CD8-positive, alpha-beta T cell (primary cell): ENCODE measurements at regions of chr12 and their contacts with region 1.

Region 1: DNA sequence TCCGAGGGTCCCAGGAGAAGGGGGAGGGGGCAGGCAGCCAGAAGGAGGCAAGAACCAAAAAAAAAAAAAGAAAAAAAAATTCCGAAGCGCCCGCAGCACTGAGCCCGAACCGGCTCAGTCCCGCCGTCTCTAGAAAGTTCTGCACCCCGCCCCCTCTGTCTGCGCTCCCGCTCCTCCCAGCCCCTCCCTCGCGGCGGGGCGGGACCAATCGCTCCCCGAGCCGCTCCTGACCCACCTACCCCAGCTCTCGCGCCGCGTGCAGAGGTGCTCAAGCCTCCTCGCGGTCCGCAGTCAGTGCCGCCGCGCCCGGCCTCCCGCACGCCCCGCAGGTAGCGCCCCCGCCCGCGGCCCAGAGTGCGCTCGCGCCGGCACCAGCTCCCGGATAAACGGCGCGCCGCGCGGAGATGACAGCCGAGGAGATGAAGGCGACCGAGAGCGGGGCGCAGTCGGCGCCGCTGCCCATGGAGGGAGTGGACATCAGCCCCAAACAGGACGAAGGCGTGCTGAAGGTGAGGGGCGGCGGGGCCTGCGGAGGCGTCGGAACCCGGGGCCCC is at the start of gene FKBP4:
- DNase-seq: peak; percentile 75 to 95 (median 88)
- ATAC-seq: peak; percentile 92
- H3K4me3 ChIP-seq: peak within 1 kb of the TSS; percentile 69 to 71
- H3K4me3 Mint-ChIP-seq: peak within 1 kb of the TSS; percentile 91
- H3K27ac ChIP-seq: peak within 1 kb of the TSS; percentile 50 to 63
- H3K27ac Mint-ChIP-seq: peak within 1 kb of the TSS; percentile 88
- H3K4me1 ChIP-seq: peaks cover 12% of the 10 kb centered on the region
- H3K4me1 Mint-ChIP-seq: peaks cover 24% of the 10 kb centered on the region
- H3K27me3 ChIP-seq: no peaks in the 10 kb centered on the region
- H3K27me3 Mint-ChIP-seq: no peaks in the 10 kb centered on the region
- CTCF ChIP-seq: no peak
- total RNA-seq, gene FKBP4: 31.1 to 34.5 TPM

Region 2: GRCh38 chr12:1804545-1805332 is 990.1 kb before region 1 on chr12:
- CTCF ChIA-PET with region 1: no interaction called
- POLR2A ChIA-PET with region 1: no interaction called
- intact Hi-C with region 1: loop called (anchors 5 to 10 kb)
- DNase-seq: peak; percentile 69 to 93 (median 87)
- ATAC-seq: peak; percentile 97
- H3K4me3 ChIP-seq: no peak overlapping the region
- H3K4me3 Mint-ChIP-seq: no peak overlapping the region
- H3K27ac ChIP-seq: peak overlapping the region in 1 of 2 experiments; percentile 66
- H3K27ac Mint-ChIP-seq: peak overlapping the region; percentile 73
- H3K4me1 ChIP-seq: peaks cover 6% of the 10 kb centered on the region
- H3K4me1 Mint-ChIP-seq: peaks cover 10% of the 10 kb centered on the region
- H3K27me3 ChIP-seq: no peaks in the 10 kb centered on the region
- H3K27me3 Mint-ChIP-seq: no peaks in the 10 kb centered on the region
- CTCF ChIP-seq: no peak

Region 3: GRCh38 chr12:2691006-2691344 is 103.8 kb before region 1 on chr12:
- CTCF ChIA-PET with region 1: interaction called, 3 read pairs
- POLR2A ChIA-PET with region 1: interaction called, 25 read pairs
- intact Hi-C with region 1: no loop called
- DNase-seq: peak in 8 of 9 experiments; percentile 35 to 86 (median 66)
- ATAC-seq: peak; percentile 75
- H3K4me3 ChIP-seq: peak overlapping the region; percentile 50 to 80
- H3K4me3 Mint-ChIP-seq: peak overlapping the region; percentile 92
- H3K27ac ChIP-seq: peak overlapping the region; percentile 75 to 87
- H3K27ac Mint-ChIP-seq: peak overlapping the region; percentile 90
- H3K4me1 ChIP-seq: peaks cover 30% of the 10 kb centered on the region
- H3K4me1 Mint-ChIP-seq: peaks cover 48% of the 10 kb centered on the region
- H3K27me3 ChIP-seq: no peaks in the 10 kb centered on the region
- H3K27me3 Mint-ChIP-seq: no peaks in the 10 kb centered on the region
- CTCF ChIP-seq: no peak

Region 4: DNA sequence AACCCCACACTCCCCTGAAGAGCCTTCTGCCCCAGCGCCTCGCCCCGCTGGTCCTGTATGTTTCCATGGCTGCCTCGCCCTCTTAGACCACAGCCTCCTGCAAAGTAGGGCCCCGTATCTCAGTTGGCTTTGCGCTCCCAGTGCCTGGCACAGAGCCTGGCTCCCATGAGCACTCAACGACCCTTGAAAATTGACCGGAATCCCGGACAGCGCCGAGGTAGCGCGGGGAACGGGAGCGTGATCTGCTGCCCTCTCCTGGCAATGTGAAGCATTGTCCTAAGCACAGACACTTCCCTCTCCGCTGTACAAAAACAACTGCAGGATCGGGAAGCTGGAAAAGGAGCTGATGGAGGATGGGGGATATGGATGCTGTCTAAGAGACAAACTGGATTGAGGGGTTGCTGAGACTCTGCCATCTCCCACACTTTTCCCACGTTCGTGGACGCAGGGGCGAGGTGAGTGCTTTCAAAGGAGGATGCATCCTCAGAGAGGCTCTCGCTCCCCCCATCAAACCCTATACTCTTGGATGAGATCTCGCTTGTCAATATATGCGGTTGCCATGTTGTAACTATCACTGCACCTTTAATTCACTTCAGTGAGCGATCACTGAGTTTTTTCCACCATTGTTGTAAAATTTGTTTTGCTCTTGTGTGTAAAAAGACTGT is 10.7 kb before region 1 on chr12:
- CTCF ChIA-PET with region 1: interaction called, 19 read pairs
- POLR2A ChIA-PET with region 1: no interaction called
- intact Hi-C with region 1: no loop called
- DNase-seq: peak in 8 of 9 experiments; percentile 29 to 73 (median 54)
- ATAC-seq: peak; percentile 87
- H3K4me3 ChIP-seq: peak overlapping the region; percentile 16
- H3K4me3 Mint-ChIP-seq: peak overlapping the region; percentile 79
- H3K27ac ChIP-seq: no peak overlapping the region
- H3K27ac Mint-ChIP-seq: no peak overlapping the region
- H3K4me1 ChIP-seq: no peaks in the 10 kb centered on the region
- H3K4me1 Mint-ChIP-seq: peaks cover 11% of the 10 kb centered on the region
- H3K27me3 ChIP-seq: peaks cover 0 to 3% of the 10 kb centered on the region in 2 experiments
- H3K27me3 Mint-ChIP-seq: peaks cover 18% of the 10 kb centered on the region
- CTCF ChIP-seq: peak; percentile 97

Region 5: DNA sequence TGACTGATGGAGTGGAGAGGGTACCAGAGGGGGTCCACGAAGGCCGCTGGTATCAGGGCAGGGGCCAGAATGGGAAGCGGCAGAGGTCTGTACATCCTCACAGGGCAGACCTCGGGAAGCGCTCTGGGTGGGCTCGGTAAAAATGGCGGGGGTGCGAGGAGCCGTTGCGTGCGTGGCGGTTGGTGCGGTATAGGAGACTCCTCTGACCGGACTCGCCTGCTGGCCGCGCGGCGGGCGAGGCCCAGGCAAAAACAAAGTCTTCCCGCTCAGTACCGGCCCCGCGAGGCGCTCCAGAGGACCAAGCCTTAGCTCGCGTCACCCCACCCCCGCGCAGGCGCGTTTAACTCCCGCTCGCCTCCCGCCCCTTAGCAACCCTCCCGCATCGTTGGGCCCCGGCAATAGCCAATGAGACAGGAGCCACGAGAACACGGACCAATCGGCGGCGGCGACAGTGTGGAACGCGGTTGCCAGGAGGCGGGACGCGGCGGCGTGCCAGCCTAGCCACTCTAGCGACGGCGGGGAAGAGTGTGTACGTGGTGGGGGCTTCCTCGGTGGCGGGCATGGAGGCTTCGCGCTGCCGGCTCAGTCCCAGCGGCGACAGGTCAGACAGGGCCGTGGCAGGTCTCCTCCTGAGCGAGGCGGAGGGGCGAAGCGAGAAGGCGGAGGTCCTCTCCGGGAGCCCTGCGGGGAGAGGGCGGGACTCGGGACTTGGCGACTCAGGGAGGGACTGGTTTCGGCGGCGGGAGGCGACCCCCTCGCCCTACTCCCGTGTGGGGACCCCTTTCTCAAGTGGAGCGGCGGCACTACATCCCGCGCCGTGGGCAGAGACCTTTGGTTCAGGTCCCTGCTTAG is 95.8 kb after region 1 on chr12 and contains the start of gene TULP3:
- CTCF ChIA-PET with region 1: no interaction called
- POLR2A ChIA-PET with region 1: no interaction called
- intact Hi-C with region 1: loop called in 1 of 2 experiments (anchors 1 kb)
- DNase-seq: peak; percentile 97 to 99 (median 98)
- ATAC-seq: peak; percentile 94
- H3K4me3 ChIP-seq: peak within 1 kb of the TSS; percentile 98 to 99
- H3K4me3 Mint-ChIP-seq: peak within 1 kb of the TSS; percentile 98
- H3K27ac ChIP-seq: peak within 1 kb of the TSS; percentile 71 to 85
- H3K27ac Mint-ChIP-seq: peak within 1 kb of the TSS; percentile 95
- H3K4me1 ChIP-seq: peaks cover 16% of the 10 kb centered on the region
- H3K4me1 Mint-ChIP-seq: peaks cover 30% of the 10 kb centered on the region
- H3K27me3 ChIP-seq: no peaks in the 10 kb centered on the region
- H3K27me3 Mint-ChIP-seq: no peaks in the 10 kb centered on the region
- CTCF ChIP-seq: no peak
- total RNA-seq, gene TULP3: 2.7 to 3.0 TPM

Region 6: DNA sequence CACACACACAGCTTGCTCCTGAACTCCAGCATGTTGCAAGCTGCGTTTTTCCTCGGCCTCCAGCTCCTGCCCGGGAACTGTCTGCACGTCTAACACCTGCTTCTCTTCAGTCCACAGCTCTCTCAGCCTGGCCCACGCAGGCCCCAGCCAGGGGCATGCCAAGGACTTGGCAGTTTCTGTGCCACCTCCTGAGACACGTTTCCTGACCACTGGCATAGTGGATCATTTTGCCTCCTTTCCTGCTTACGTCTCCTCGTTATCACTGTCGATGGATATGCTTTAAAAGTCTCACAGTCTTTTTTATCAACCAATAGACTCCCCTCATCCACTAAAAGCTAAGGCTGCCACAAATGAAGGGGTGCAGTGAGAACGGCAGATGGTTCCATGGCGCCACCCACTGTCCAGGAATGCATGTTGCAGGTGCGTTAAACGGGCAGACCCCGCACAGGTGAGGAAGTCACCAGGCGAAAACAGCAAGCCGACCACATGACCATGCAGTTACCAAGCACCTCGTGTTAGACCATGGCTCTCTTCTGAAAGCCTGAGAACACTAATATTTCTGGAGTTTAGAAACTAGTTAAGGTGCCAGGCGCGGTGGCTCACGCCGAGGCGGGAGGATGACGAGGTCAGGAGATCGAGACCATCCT is 149.7 kb after region 1 on chr12:
- CTCF ChIA-PET with region 1: no interaction called
- POLR2A ChIA-PET with region 1: no interaction called
- intact Hi-C with region 1: no loop called
- DNase-seq: peak; percentile 12 to 57 (median 48)
- ATAC-seq: peak; percentile 79
- H3K4me3 ChIP-seq: no peak overlapping the region
- H3K4me3 Mint-ChIP-seq: no peak overlapping the region
- H3K27ac ChIP-seq: no peak overlapping the region
- H3K27ac Mint-ChIP-seq: no peak overlapping the region
- H3K4me1 ChIP-seq: no peaks in the 10 kb centered on the region
- H3K4me1 Mint-ChIP-seq: peaks cover 2% of the 10 kb centered on the region
- H3K27me3 ChIP-seq: no peaks in the 10 kb centered on the region
- H3K27me3 Mint-ChIP-seq: peaks cover 8% of the 10 kb centered on the region
- CTCF ChIP-seq: peak; percentile 65